ENCODE measurements at regions of chr11 and their contacts with region 1.

Region 1: DNA sequence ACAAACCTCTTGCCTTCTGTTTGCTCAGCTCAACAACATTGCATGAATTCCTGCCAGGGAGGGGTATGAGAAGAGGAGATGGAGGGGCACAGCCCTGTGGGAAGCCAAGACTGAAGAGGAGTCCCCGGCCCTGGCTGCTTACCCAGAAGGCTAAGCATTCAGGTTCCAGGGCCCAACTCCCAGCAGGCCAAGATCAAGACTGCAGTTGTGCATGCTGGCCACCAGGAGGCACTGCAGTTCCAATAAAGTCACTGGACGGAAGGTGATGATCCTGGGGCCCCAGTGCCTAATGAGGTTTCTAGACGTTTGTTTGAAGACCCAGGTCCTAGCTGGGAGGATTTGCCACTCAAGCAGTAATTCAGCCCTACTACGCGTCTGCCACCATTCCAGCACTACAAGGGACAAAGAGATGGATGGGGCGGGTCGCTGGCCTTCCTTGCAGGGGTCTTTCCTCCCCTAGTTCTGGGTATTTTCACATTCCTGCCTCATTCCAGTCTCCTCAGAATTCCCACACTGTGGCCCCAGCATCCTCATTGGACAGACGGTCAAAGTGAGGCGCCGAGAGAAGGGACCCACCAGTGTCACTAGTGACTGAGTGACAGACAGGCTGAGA is 23.6 kb downstream of the ALX4 start:
- DNase-seq: no peak
- H3K4me3 ChIP-seq: no peak overlapping the region
- H3K27ac ChIP-seq: no peak overlapping the region
- H3K4me1 ChIP-seq: no peaks in the 10 kb centered on the region
- H3K27me3 ChIP-seq: no peaks in the 10 kb centered on the region
- CTCF ChIP-seq: peak; percentile 86 to 93 (median 88)
- POLR2A ChIP-seq: no peak

Region 2: DNA sequence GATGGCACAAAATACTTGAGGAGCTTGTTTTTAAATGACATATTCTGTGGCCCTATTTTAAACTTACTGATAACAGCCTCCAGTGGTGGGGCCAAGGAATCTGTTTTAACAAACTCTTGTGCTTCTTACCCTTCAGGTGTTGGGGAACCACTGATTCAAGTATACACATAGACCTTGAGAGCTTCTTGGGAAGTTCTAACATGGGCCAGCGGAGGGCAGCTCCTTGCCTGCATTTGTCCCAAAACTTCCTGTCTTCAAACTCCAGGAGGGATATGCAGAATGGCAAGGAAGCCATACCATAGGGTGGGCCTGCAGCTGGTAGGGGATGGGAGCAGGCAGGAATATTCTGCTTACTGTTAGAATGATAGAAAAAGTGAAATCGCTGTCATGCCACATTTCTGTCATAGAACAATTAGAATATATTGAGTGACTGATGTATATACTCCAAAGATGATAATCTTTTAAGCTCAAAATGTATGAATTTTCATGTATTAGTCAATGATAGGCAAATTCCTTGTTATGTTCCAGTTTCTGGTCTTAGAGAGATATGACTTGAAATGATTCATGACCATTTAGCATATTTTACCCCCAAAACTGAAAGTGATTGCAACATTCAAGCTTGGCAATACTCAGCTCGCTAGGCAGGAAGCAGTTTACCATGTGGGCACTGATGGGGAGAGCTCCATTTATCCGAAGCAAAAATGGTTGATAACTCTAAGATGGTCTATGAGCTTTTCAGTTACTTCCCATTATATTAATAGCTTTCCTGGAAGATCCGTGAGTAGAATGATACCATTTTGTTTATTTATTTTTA is 181.7 kb before region 1 on chr11:
- intact Hi-C with region 1: loop called (anchors 10 kb)
- DNase-seq: no peak
- H3K4me3 ChIP-seq: no peak overlapping the region
- H3K27ac ChIP-seq: no peak overlapping the region
- H3K4me1 ChIP-seq: no peaks in the 10 kb centered on the region
- H3K27me3 ChIP-seq: no peaks in the 10 kb centered on the region
- CTCF ChIP-seq: peak in 1 of 4 experiments; percentile 5
- POLR2A ChIP-seq: no peak